ENCODE measurements at regions of chr17 and their contacts with region 1.

Region 1: DNA sequence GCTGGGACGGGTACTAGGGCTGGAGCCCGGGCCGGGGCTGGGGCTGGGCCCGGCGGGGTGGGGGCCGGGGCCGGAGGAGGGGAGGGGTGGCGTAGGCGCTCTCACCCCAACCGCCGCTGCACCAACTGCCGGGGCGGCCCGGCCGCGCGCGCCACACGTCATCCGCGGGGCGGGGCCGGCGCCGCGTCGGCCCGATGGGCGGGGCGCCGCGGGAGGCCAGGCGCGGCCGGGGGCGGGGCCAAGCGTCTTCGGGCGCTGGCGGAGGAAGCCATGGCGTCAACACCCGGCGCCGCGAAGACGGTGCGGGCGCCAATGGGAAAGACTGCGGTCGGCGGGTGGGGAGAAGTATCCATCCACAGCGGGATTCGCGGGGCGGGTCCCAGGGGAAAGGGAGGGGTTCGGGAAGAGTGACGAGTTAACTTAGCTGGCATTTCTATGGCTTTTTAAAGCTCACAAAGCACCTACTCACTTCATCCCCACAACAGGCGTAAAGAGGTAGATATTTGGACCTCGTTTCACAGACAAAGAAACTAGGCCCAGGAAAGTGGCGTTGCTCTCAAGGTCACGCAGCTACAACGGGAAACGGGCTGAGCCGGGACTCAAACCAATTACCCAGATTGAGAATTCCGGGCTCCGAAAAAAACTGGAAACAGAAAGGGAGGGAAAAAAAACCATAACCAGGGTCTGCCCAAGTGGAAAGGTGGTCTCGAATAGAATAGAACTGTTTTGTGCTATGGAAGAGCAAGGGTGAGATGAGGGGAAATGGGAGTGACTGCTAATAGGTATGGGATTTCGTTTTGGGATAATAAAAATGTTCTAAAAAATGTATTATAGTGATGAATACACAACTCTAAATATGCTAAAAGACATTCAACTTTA is at the start of gene SPAG9:
- DNase-seq: peak; percentile 98
- H3K4me3 Mint-ChIP-seq: peak within 1 kb of the TSS; percentile 91
- H3K27ac Mint-ChIP-seq: peak within 1 kb of the TSS; percentile 98
- H3K4me1 Mint-ChIP-seq: peaks cover 43% of the 10 kb centered on the region
- H3K27me3 Mint-ChIP-seq: peaks cover 1% of the 10 kb centered on the region
- total RNA-seq, gene SPAG9: 47.5 and 47.7 TPM in 2 replicates

Region 2: DNA sequence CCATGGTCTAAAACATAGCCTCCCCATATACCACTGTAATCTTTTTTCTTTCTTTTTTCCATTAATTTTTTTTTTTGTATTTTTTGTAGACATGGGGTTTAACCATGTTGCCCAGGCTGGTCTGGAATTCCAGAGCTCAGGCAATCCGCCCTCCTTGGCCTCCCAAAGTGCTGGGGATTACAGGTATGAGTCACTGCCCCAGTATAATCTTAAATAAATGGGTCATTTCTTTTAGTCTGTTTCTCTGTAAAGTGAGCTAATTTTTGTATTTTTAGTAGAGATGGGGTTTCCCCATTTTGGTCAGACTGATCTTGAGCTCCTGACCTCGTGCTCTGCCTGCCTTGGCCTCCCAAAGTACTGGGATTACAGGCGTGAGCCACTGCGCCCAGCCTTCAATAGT is 26.7 kb after region 1 on chr17:
- intact Hi-C with region 1: loop called (anchors 1 kb)
- DNase-seq: no peak
- H3K4me3 Mint-ChIP-seq: peak overlapping the region; percentile 8
- H3K27ac Mint-ChIP-seq: peak overlapping the region; percentile 83
- H3K4me1 Mint-ChIP-seq: peaks cover 16% of the 10 kb centered on the region
- H3K27me3 Mint-ChIP-seq: no peaks in the 10 kb centered on the region

Region 3: DNA sequence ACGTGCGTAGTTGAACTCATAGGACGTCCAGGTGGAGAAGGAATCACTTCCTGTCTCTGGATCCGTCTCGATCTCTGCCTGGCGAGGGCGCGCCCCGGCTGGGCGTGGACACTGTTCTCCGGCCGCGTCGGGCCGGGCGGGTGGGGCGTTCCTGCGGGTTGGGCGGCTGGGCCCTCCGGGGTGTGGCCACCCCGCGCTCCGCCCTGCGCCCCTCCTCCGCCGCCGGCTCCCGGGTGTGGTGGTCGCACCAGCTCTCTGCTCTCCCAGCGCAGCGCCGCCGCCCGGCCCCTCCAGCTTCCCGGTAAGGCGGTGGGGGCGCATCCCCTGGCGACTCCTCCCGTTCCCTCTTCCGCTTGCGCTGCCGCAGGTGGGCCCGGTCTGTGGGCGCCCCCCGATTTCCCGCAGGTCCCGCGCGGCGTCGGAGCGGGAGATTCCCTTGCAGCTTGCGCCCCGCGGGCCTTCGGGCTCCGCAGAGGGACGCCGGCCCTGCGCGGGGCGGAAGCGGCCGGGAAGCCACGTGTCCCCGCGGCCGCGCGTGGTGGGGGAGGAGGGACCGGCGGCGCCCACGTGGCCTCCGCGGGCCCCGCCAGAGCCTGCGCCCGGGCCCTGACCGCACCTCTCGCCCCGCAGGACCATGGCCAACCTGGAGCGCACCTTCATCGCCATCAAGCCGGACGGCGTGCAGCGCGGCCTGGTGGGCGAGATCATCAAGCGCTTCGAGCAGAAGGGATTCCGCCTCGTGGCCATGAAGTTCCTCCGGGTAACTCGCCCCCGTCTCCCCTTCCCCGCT is 45.4 kb after region 1 on chr17 and contains the start of gene NME2:
- intact Hi-C with region 1: loop called (anchors 1 kb)
- DNase-seq: peak; percentile 94
- H3K4me3 Mint-ChIP-seq: peak within 1 kb of the TSS; percentile 88
- H3K27ac Mint-ChIP-seq: peak within 1 kb of the TSS; percentile 97
- H3K4me1 Mint-ChIP-seq: peaks cover 30% of the 10 kb centered on the region
- H3K27me3 Mint-ChIP-seq: no peaks in the 10 kb centered on the region
- total RNA-seq, gene NME2: 752 and 795 TPM in 2 replicates

Region 4: GRCh38 chr17:51260125-51260880 is 139.3 kb after region 1 on chr17 and contains the start of gene UTP18:
- intact Hi-C with region 1: loop called (anchors 1 kb)
- DNase-seq: peak; percentile 98
- H3K4me3 Mint-ChIP-seq: peak within 1 kb of the TSS; percentile 84
- H3K27ac Mint-ChIP-seq: peak within 1 kb of the TSS; percentile 97
- H3K4me1 Mint-ChIP-seq: peaks cover 48% of the 10 kb centered on the region
- H3K27me3 Mint-ChIP-seq: no peaks in the 10 kb centered on the region
- total RNA-seq, gene UTP18: 79.9 and 84.5 TPM in 2 replicates

Region 5: DNA sequence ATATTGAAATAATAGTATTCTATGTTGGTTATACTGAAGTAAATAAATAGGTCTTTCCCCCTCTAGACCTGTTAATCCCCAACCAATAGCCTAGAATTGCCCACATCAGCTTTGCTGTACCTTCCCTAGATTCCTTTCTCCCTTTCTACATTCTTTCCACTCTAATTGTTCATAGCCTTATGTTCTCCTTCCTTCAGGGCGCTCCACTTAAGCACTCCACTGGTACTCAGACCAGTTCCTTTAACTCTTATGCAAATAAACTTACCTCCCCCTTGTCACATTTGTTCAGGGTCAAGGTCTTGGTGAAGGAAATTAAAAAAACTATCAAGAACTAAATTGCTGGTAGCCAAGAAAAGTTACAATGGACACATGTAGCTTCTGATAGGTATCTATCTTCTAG is 434.2 kb after region 1 on chr17:
- intact Hi-C with region 1: no loop called
- DNase-seq: no peak
- H3K4me3 Mint-ChIP-seq: no peak overlapping the region
- H3K27ac Mint-ChIP-seq: no peak overlapping the region
- H3K4me1 Mint-ChIP-seq: no peaks in the 10 kb centered on the region
- H3K27me3 Mint-ChIP-seq: peaks cover 4% of the 10 kb centered on the region